ENCODE measurements at regions of chr9 and their contacts with region 1.

Region 1: DNA sequence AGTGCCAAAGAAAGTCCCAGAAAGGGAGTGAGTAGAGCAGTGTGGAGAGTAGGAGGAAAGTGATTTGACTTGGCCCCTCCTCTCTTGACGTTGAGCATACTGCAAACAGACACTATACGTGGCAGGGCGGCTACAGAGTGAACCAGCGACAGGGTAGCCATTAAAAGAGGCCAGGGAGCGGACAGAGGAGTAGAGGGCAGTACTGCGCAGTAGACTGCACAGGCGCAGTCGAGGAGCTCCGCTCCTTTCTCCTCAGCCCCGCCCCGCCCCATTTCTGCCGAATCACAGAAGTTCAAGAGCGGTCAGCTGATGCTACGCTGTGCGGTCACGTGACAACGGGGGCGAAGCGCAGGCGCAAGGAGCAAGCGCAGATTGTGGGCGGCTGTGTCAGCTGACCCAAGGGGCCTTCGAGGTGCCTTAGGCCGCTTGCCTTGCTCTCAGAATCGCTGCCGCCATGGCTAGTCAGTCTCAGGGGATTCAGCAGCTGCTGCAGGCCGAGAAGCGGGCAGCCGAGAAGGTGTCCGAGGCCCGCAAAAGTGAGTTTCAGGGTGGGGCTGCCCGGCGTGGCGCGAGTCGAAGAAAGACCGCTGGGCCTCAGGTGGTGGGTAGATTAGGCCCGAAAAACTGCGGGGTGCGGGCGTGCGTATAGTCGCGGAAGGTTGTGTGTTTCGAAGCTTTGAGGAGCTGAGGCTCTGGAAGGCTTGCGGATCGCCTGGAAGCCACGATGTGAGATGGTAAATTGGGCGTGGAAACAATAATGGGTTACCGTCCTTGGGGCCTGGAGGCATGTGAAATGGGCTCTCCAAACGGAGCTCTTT is at the start of gene ATP6V1G1:
- DNase-seq: peak; percentile 96 to 97
- H3K4me3 ChIP-seq: peak within 1 kb of the TSS; percentile 75 to 97 (median 89)
- H3K27ac ChIP-seq: peak within 1 kb of the TSS; percentile 82
- H3K4me1 ChIP-seq: peaks cover 6 to 16% (median 7%) of the 10 kb centered on the region in 4 experiments
- H3K27me3 ChIP-seq: no peaks in the 10 kb centered on the region
- CTCF ChIP-seq: no peak
- EP300 ChIP-seq: peak; percentile 5 to 46; a peak in 2 of 3 replicates
- POLR2A ChIP-seq: peak; percentile 84 to 90
- RAD21 ChIP-seq: peak in 1 of 2 experiments; percentile 10; a peak in 1 of 4 replicates
- total RNA-seq, gene ATP6V1G1: 112 and 114 TPM in 2 replicates

Region 2: DNA sequence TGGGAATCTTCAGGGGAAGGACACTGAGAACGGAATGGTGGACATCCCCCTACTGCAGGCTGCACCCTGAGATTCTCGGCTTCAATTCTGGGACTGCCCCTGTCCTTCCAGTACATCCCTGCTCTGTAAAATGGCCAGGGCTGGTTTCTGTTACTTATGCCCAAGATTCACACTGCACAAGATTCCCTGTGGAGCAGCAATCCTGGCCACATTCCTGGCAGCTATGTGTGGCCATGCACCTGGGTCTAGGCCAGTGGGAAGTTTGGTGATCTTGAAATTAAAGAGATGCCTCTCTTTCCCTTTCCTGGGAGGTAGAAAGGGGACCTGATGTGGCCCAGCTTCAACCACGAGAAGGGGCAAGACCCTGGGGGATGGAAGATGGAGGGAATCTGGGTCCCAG is 110.0 kb before region 1 on chr9:
- CTCF ChIA-PET with region 1: no interaction called
- POLR2A ChIA-PET with region 1: no interaction called
- DNase-seq: no peak
- H3K4me3 ChIP-seq: no peak overlapping the region
- H3K27ac ChIP-seq: no peak overlapping the region; the same call in 1 of the 2 replicates
- H3K4me1 ChIP-seq: peaks cover 0 to 2% (median 0%) of the 10 kb centered on the region in 4 experiments; a peak in 2 of 7 replicates
- H3K27me3 ChIP-seq: no peaks in the 10 kb centered on the region
- CTCF ChIP-seq: no peak
- EP300 ChIP-seq: no peak
- POLR2A ChIP-seq: no peak
- RAD21 ChIP-seq: no peak

Region 3: DNA sequence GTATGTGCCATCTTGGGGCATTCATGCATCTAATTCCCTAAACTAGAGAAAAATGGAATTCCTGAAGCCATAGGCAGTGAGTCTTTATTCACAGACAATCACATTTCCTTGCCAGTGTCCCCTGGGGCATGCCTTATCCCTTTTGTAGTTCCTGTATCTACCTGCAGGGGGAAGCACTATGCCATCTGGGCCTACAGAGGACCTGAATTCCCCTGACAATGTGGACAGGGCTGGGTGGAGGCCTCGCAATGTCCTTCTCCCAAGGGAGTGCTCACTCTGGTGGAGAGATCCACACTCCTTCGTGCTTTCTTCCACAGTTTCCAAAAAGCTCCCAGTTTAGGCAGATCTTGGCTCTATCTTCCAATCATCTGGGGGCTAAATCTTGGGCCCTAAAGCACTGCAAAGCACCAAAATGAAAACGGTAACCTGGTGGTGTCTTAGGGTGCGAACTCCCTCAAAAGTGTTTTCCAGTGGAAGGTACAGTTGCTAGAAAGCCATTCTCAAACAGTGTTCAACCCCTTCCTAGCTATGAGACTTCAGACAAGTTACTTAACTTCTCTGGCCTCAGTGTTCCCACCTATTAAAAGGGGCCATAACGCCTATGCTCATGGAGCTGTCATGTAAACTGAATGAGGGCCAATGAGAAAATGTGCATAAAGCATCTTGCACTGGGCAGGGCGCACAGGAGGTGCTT is 99.8 kb before region 1 on chr9:
- CTCF ChIA-PET with region 1: interaction called, 18 read pairs
- POLR2A ChIA-PET with region 1: interaction called, 3 read pairs
- DNase-seq: peak in 1 of 2 experiments; percentile 78
- H3K4me3 ChIP-seq: no peak overlapping the region
- H3K27ac ChIP-seq: no peak overlapping the region
- H3K4me1 ChIP-seq: peaks cover 0 to 3% (median 0%) of the 10 kb centered on the region in 4 experiments; a peak in 3 of 7 replicates
- H3K27me3 ChIP-seq: no peaks in the 10 kb centered on the region
- CTCF ChIP-seq: peak; percentile 70 to 86 (median 81)
- EP300 ChIP-seq: no peak
- POLR2A ChIP-seq: no peak
- RAD21 ChIP-seq: peak; percentile 83 to 86

Region 4: DNA sequence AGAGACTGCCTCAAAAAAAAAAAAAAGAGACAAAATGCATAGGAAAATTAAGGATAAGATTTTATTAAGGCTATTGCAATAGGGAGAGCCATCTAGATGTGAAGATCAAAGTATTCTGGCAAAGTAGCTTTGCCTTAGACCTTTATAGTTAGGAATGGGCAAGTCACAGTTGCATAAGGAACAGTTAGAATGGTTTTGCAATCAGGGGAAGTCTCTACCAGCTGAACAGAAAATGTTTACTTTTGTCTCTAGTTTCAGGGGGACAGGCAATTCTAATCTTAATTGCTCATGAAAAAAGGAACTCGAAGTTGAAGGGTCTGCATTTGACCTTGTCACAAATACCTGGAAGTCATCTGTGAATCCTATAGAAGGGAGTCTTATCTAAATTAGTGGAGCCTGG is 13.2 kb before region 1 on chr9:
- CTCF ChIA-PET with region 1: interaction called, 5 read pairs
- POLR2A ChIA-PET with region 1: interaction called, 23 read pairs
- DNase-seq: no peak
- H3K4me3 ChIP-seq: no peak overlapping the region
- H3K27ac ChIP-seq: no peak overlapping the region
- H3K4me1 ChIP-seq: no peaks in the 10 kb centered on the region
- H3K27me3 ChIP-seq: no peaks in the 10 kb centered on the region
- CTCF ChIP-seq: no peak
- EP300 ChIP-seq: no peak
- POLR2A ChIP-seq: no peak
- RAD21 ChIP-seq: no peak

Region 5: GRCh38 chr9:114611516-114612271 is 24.1 kb after region 1 on chr9:
- CTCF ChIA-PET with region 1: interaction called, 7 read pairs
- POLR2A ChIA-PET with region 1: interaction called, 218 read pairs
- DNase-seq: peak in 1 of 2 experiments; percentile 70
- H3K4me3 ChIP-seq: peak overlapping the region; percentile 37 to 78 (median 40)
- H3K27ac ChIP-seq: peak overlapping the region; percentile 33; the same call in 1 of the 2 replicates
- H3K4me1 ChIP-seq: peaks cover 11 to 21% (median 15%) of the 10 kb centered on the region in 4 experiments
- H3K27me3 ChIP-seq: peaks cover 0 to 13% (median 7%) of the 10 kb centered on the region in 4 experiments; a peak in 5 of 7 replicates
- CTCF ChIP-seq: no peak
- EP300 ChIP-seq: no peak
- POLR2A ChIP-seq: peak in 1 of 2 experiments; percentile 29; a peak in 1 of 3 replicates
- RAD21 ChIP-seq: no peak

Measured in H1 (cell line).